Dorsolateral prefrontal cortex (tissue), 120 donors: ENCODE measurements at regions of chr2 and their contacts with region 1.

Region 1: DNA sequence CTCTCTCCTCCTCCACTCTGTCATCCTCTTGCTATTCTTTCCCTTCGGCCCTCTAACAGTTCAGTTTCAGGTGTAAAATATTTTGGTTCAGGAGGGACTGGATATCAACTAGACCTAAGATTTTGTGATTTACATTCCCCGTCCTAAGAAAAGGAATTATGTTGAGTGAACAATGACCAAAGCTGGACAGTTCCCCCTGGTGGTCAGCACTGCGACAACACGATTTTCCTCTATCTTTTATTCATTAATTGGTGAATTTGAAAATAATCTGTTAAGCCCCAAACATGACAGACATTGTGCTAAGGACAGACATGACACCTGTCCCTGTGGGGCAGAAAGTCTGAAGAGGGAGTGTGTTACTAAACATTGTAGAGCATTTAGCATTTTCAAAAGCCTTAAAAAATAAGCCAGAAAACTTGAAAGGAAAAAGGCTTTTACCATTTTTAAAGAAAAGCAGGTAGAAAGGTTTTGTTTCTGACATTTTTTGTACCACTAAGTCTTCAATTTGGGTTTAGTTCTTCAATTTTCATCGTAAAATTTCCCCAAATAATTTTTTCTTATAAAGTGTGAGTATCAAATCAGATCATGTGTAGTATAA is 28.4 kb upstream of the GTF2A1L start:
- DNase-seq: peak in 7 of 10 donors; percentile 29 to 70 (median 55)
- H3K4me3 ChIP-seq: peak overlapping the region in 3 of 59 donors; percentile 7 to 18 (median 18)
- H3K27ac ChIP-seq: no peak overlapping the region
- H3K27me3 ChIP-seq: no peaks in the 10 kb centered on the region
- CTCF ChIP-seq: peak; percentile 62 to 96 (median 78)

Region 2: GRCh38 chr2:48433682-48434081 is 155.6 kb before region 1 on chr2:
- intact Hi-C with region 1: loop called in 1 of 2 experiments (anchors 10 kb)
- DNase-seq: peak in 4 of 10 donors; percentile 41 to 59 (median 50)
- H3K4me3 ChIP-seq: peak overlapping the region in 17 of 59 donors; percentile 2 to 31 (median 18)
- H3K27ac ChIP-seq: peak overlapping the region in 50 of 59 donors; percentile 2 to 77 (median 52)
- H3K27me3 ChIP-seq: no peaks in the 10 kb centered on the region
- CTCF ChIP-seq: peak in 2 of 56 donors; percentile 9 to 13

Region 3: DNA sequence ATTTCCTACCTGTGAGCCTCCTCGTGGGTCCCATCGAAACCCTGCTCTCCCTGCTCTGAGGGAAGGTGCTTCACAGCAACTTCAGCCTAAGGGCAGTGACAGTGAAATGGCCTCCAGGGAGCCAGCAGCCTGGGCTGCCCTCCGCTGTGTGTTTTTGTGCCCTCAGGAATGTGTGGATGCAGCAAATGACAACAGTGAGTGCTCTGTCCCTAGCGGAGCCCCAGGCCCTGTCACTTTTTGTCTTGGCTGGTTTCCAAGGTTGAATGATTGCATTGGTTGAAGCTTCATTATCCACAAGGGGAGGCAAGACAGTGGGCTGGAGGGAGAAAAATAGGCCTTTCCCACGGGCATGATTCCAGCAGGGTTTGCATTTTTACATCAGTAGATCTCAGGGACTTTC is 16.5 kb before region 1 on chr2:
- intact Hi-C with region 1: loop called in 1 of 2 experiments (anchors 1 kb)
- DNase-seq: no peak
- H3K4me3 ChIP-seq: no peak overlapping the region
- H3K27ac ChIP-seq: no peak overlapping the region
- H3K27me3 ChIP-seq: no peaks in the 10 kb centered on the region
- CTCF ChIP-seq: no peak